MCF 10A (cell line): ENCODE measurements at regions of chr2 and their contacts with region 1.

Region 1: DNA sequence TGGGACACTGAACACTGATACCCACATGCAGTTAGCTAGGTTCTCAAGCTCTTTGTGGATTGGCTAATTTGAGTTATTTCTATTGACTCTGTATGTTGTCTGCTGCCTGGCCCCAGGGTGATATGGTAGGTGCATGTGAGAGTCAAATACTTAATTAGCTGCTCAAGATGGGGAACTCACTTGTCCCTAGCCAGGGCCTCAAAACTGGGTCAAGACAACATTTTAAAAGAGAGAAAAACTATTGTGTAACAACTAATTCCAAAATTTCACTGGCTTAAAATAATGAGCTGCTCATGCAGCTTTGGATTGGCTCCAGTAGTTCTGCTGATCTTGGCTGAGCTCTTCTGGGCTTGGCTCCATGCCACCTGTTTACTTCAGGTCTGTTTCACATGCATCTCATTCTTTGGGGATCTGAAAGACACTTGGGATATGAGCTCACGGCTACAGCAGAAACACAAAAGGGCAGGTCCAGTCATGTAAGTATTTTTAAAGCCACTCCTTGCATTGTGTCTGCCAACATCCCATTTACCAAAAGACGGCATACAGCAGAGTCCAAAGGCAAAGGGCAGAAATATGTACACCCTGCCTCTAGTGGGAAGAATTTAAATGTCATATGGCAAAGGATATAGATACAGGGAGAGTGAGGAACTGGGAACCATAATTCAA is 716.8 kb downstream of the SUCLG1 start:
- DNase-seq: peak; percentile 94
- H3K4me3 Mint-ChIP-seq: no peak overlapping the region
- H3K27ac Mint-ChIP-seq: peak overlapping the region; percentile 80
- H3K4me1 Mint-ChIP-seq: peaks cover 13% of the 10 kb centered on the region
- H3K27me3 Mint-ChIP-seq: no peaks in the 10 kb centered on the region
- CTCF ChIP-seq: peak; percentile 21

Region 2: GRCh38 chr2:83572400-83572799 is 169.8 kb before region 1 on chr2:
- CTCF ChIA-PET with region 1: no interaction called
- POLR2A ChIA-PET with region 1: no interaction called
- intact Hi-C with region 1: loop called (anchors 10 kb)
- DNase-seq: peak; percentile 44
- H3K4me3 Mint-ChIP-seq: peak overlapping the region; percentile 5
- H3K27ac Mint-ChIP-seq: no peak overlapping the region
- H3K4me1 Mint-ChIP-seq: peaks cover 19% of the 10 kb centered on the region
- H3K27me3 Mint-ChIP-seq: no peaks in the 10 kb centered on the region
- CTCF ChIP-seq: no peak

Region 3: GRCh38 chr2:83705146-83705545 is 37.1 kb before region 1 on chr2:
- CTCF ChIA-PET with region 1: no interaction called
- POLR2A ChIA-PET with region 1: no interaction called
- intact Hi-C with region 1: no loop called
- DNase-seq: no peak
- H3K4me3 Mint-ChIP-seq: no peak overlapping the region
- H3K27ac Mint-ChIP-seq: no peak overlapping the region
- H3K4me1 Mint-ChIP-seq: no peaks in the 10 kb centered on the region
- H3K27me3 Mint-ChIP-seq: no peaks in the 10 kb centered on the region
- CTCF ChIP-seq: no peak

Region 4: GRCh38 chr2:83756219-83756618 is 14.0 kb after region 1 on chr2:
- CTCF ChIA-PET with region 1: interaction called, 10 read pairs
- POLR2A ChIA-PET with region 1: no interaction called
- intact Hi-C with region 1: no loop called
- DNase-seq: no peak
- H3K4me3 Mint-ChIP-seq: no peak overlapping the region
- H3K27ac Mint-ChIP-seq: no peak overlapping the region
- H3K4me1 Mint-ChIP-seq: no peaks in the 10 kb centered on the region
- H3K27me3 Mint-ChIP-seq: no peaks in the 10 kb centered on the region
- CTCF ChIP-seq: no peak

Region 5: GRCh38 chr2:83850071-83850725 is 107.9 kb after region 1 on chr2:
- CTCF ChIA-PET with region 1: no interaction called
- POLR2A ChIA-PET with region 1: no interaction called
- intact Hi-C with region 1: no loop called
- DNase-seq: peak; percentile 57
- H3K4me3 Mint-ChIP-seq: no peak overlapping the region
- H3K27ac Mint-ChIP-seq: peak overlapping the region; percentile 87
- H3K4me1 Mint-ChIP-seq: peaks cover 19% of the 10 kb centered on the region
- H3K27me3 Mint-ChIP-seq: no peaks in the 10 kb centered on the region
- CTCF ChIP-seq: no peak